ENCODE measurements at regions of chr15 and their contacts with region 1.

Region 1: DNA sequence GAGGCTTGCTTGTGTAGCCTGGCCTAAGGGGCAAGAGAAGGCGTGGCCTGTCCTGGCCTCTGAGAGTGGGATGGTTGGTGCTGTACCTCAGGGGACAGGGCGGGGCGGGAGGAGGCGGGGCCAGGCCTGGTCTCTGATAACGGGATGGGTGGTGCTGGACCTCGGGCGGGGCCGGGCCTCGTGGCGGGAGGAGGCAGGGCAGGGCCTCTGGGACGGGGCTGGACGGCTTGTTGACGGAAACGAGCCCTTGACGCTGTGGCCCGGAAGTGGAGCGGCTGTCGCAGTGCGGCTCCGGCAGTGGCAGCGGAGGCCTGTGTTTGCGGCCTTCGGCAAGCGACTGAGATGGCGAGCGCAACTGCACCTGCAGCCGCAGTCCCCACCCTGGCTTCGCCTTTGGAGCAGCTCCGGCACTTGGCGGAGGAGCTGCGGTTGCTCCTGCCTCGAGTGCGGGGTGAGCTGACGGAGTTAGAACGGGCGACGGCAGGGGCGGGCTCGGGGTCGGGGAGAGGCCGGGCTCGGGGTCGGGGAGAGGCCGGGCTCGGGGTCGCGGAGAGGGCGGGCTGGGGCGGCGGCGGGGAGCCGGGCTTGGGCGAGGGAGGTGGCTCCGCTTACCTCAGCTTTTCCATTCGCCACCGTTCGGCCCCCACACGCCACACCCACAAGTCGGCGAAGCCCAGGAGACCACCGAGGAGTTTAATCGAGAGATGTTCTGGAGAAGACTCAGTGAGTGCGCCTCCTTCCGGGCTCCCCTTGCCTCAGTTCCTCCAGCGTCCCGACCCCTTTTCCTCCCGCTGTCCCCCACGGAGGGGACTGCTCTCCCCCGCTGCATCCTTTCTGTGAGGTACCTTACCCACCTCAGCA is at the start of gene CCNDBP1:
- DNase-seq: peak; percentile 69 to 90 (median 79)
- ATAC-seq: peak; percentile 91
- H3K4me3 ChIP-seq: peak within 1 kb of the TSS; percentile 91
- H3K4me3 Mint-ChIP-seq: peak within 1 kb of the TSS; percentile 90 to 98 (median 96)
- H3K27ac ChIP-seq: peak within 1 kb of the TSS; percentile 95
- H3K27ac Mint-ChIP-seq: peak within 1 kb of the TSS; percentile 95 to 99 (median 98)
- H3K4me1 ChIP-seq: peaks cover 16 to 22% of the 10 kb centered on the region in 2 donors
- H3K4me1 Mint-ChIP-seq: peaks cover 19 to 54% (median 35%) of the 10 kb centered on the region in 7 donors
- H3K27me3 ChIP-seq: no peaks in the 10 kb centered on the region
- H3K27me3 Mint-ChIP-seq: no peaks in the 10 kb centered on the region
- total RNA-seq, gene CCNDBP1: 72.3 to 110 (median 100) TPM

Region 2: GRCh38 chr15:41972253-41973242 is 1212.8 kb before region 1 on chr15 and contains the start of gene EHD4:
- CTCF ChIA-PET with region 1: no interaction called
- POLR2A ChIA-PET with region 1: no interaction called
- intact Hi-C with region 1: loop called in 1 of 2 experiments (anchors 5 kb)
- DNase-seq: peak; percentile 85 to 96 (median 94)
- ATAC-seq: peak; percentile 91
- H3K4me3 ChIP-seq: peak within 1 kb of the TSS; percentile 87
- H3K4me3 Mint-ChIP-seq: peak within 1 kb of the TSS; percentile 85 to 97 (median 94)
- H3K27ac ChIP-seq: peak within 1 kb of the TSS; percentile 83
- H3K27ac Mint-ChIP-seq: peak within 1 kb of the TSS; percentile 90 to 97 (median 95)
- H3K4me1 ChIP-seq: peaks cover 19 to 23% of the 10 kb centered on the region in 2 donors
- H3K4me1 Mint-ChIP-seq: peaks cover 31 to 55% (median 45%) of the 10 kb centered on the region in 7 donors
- H3K27me3 ChIP-seq: no peaks in the 10 kb centered on the region
- H3K27me3 Mint-ChIP-seq: peaks cover 0 to 17% (median 7%) of the 10 kb centered on the region in 5 donors
- total RNA-seq, gene EHD4: 10.4 to 48.3 (median 23.7) TPM

Region 3: DNA sequence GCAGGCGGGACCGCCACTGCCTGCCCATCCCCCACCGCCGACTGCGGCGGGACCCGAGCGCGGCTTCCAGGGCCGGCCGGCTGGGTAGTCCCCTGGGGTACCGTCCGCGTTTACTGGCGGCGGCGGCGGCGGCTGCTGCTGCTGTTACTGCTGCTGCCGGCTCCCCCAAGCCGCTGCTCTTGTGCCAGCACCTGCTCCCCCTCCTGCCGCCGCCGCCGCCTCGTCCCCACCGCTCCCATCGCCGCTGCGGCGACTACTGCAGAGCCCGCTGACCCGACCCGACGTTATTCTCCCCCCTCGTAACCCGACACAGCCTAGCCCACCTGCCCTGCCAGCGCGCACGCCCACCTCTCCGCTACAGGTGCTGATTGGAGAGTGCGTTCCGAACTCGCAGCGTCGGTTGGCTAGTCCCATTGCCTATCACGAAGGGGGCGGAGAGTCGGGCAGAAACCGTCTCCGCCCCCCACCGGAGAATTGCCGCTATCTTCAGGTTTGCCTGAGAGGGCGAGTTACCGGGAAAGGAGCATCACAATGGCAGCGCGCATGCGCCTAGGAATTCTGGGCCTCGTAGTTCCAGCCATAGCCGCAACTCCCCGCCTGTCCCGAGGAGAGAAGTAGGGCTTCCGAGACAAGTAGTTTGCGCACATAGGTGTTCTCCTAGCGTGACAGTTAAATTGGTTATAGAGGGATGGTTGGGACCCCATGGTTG is 264.7 kb before region 1 on chr15 and contains the start of gene TTBK2:
- CTCF ChIA-PET with region 1: no interaction called
- POLR2A ChIA-PET with region 1: no interaction called
- intact Hi-C with region 1: loop called (anchors 2 kb)
- DNase-seq: peak; percentile 93 to 98 (median 97)
- ATAC-seq: peak; percentile 98
- H3K4me3 ChIP-seq: peak within 1 kb of the TSS; percentile 89
- H3K4me3 Mint-ChIP-seq: peak within 1 kb of the TSS; percentile 93 to 100 (median 97)
- H3K27ac ChIP-seq: peak within 1 kb of the TSS; percentile 71
- H3K27ac Mint-ChIP-seq: peak within 1 kb of the TSS; percentile 88 to 97 (median 95)
- H3K4me1 ChIP-seq: peaks cover 4 to 5% of the 10 kb centered on the region in 2 donors
- H3K4me1 Mint-ChIP-seq: peaks cover 14 to 40% (median 29%) of the 10 kb centered on the region in 7 donors
- H3K27me3 ChIP-seq: no peaks in the 10 kb centered on the region
- H3K27me3 Mint-ChIP-seq: peaks cover 0 to 3% (median 0%) of the 10 kb centered on the region in 5 donors
- total RNA-seq, gene TTBK2: 15.7 to 30.5 (median 28.8) TPM

Region 4: DNA sequence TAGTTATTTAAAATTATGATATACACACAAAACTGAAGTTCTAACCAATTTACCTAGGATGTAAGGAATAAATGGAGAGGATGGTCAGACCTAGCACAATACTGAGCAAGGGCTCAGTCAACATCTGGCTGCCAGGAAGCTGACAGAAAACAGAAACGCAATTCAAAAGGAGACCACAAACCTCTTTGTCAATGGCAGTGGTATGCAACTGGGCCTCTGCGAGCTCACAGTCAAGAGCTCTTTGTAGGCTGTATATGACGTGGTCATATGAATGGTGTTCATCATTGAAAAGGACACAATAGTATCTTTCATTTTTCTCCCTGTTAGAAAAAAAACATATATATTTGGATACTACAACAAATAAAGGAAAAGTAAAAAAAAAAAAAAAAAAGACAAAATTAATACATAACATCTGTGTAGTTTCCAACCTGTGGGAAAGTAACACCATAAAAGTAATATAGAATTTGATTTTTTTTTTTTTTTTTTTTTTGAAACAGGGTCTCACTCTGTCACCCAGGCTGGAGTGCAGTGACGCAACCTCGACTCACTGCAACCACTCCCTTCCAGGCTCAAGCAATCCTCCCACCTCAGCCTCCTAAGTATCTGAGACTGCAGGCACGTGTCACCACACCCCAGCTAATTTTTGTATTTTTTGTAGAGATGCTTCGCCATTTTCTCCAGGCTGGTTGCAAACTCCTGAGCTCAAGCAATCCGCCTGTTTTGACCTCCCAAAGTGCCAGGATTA is 117.5 kb before region 1 on chr15:
- CTCF ChIA-PET with region 1: no interaction called
- POLR2A ChIA-PET with region 1: no interaction called
- intact Hi-C with region 1: no loop called
- DNase-seq: no peak
- ATAC-seq: no peak
- H3K4me3 ChIP-seq: no peak overlapping the region
- H3K4me3 Mint-ChIP-seq: no peak overlapping the region
- H3K27ac ChIP-seq: no peak overlapping the region
- H3K27ac Mint-ChIP-seq: no peak overlapping the region
- H3K4me1 ChIP-seq: no peaks in the 10 kb centered on the region
- H3K4me1 Mint-ChIP-seq: peaks cover 0 to 8% (median 0%) of the 10 kb centered on the region in 7 donors
- H3K27me3 ChIP-seq: no peaks in the 10 kb centered on the region
- H3K27me3 Mint-ChIP-seq: no peaks in the 10 kb centered on the region

Region 5: DNA sequence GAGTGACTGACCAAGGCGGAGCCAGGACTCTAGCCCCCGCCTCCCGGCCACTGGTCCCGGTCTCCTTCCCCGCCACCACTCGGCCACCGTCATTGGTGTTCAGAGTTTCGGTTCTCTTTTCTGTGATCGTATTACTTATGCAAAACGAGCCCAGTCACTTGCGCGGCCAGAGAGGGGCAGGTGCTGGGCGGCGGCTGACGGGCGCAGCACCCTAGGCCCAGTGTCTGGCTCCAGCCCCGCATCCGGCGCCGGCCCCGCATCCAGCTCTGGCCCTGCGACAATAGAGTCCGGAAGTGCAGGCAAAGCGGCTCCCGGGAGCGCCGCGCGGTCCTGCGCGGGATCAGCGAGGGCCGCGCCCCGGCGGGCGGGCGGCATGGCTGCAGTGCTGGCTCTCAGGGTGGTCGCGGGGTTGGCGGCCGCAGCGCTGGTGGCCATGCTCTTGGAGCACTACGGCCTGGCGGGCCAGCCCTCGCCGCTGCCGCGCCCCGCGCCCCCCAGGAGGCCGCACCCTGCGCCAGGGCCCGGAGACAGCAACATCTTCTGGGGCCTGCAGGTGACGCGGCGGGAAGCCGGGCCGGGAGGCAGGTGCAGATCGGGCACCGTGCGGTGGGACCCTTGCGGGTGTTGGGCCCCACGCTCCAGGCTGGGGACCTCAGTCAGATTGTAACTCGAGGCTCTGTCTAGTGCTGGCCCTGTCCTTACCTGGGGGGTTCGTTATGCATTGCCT is 51.8 kb before region 1 on chr15 and contains the start of gene TMEM62:
- CTCF ChIA-PET with region 1: no interaction called
- POLR2A ChIA-PET with region 1: interaction called, 4 read pairs
- intact Hi-C with region 1: loop called in 1 of 2 experiments (anchors 1 kb)
- DNase-seq: peak; percentile 33 to 67 (median 46)
- ATAC-seq: peak; percentile 88
- H3K4me3 ChIP-seq: peak within 1 kb of the TSS; percentile 65
- H3K4me3 Mint-ChIP-seq: peak within 1 kb of the TSS; percentile 86 to 97 (median 95)
- H3K27ac ChIP-seq: peak within 1 kb of the TSS; percentile 72
- H3K27ac Mint-ChIP-seq: peak within 1 kb of the TSS; percentile 77 to 93 (median 89)
- H3K4me1 ChIP-seq: peaks cover 6 to 11% of the 10 kb centered on the region in 2 donors
- H3K4me1 Mint-ChIP-seq: peaks cover 13 to 29% (median 22%) of the 10 kb centered on the region in 7 donors
- H3K27me3 ChIP-seq: no peaks in the 10 kb centered on the region
- H3K27me3 Mint-ChIP-seq: peaks cover 0 to 15% (median 7%) of the 10 kb centered on the region in 5 donors
- total RNA-seq, gene TMEM62: 12.0 to 21.5 (median 17.7) TPM

Region 6: GRCh38 chr15:43225201-43225949 is 40.0 kb after region 1 on chr15:
- CTCF ChIA-PET with region 1: no interaction called
- POLR2A ChIA-PET with region 1: no interaction called
- intact Hi-C with region 1: loop called in 1 of 2 experiments (anchors 1 kb)
- DNase-seq: peak in 7 of 9 donors; percentile 29 to 69 (median 56)
- ATAC-seq: peak; percentile 85
- H3K4me3 ChIP-seq: no peak overlapping the region
- H3K4me3 Mint-ChIP-seq: peak overlapping the region in 4 of 10 donors; percentile 1 to 62 (median 28)
- H3K27ac ChIP-seq: no peak overlapping the region
- H3K27ac Mint-ChIP-seq: no peak overlapping the region
- H3K4me1 ChIP-seq: no peaks in the 10 kb centered on the region
- H3K4me1 Mint-ChIP-seq: peaks cover 1 to 9% (median 7%) of the 10 kb centered on the region in 7 donors
- H3K27me3 ChIP-seq: no peaks in the 10 kb centered on the region
- H3K27me3 Mint-ChIP-seq: peaks cover 5 to 24% (median 11%) of the 10 kb centered on the region in 5 donors

Region 7: GRCh38 chr15:43510200-43511011 is 325.0 kb after region 1 on chr15:
- CTCF ChIA-PET with region 1: no interaction called
- POLR2A ChIA-PET with region 1: interaction called, 3 read pairs
- intact Hi-C with region 1: loop called in 1 of 2 experiments (anchors 10 kb)
- DNase-seq: peak; percentile 91 to 96 (median 94)
- ATAC-seq: peak; percentile 97
- H3K4me3 ChIP-seq: peak overlapping the region; percentile 88
- H3K4me3 Mint-ChIP-seq: peak overlapping the region; percentile 89 to 100 (median 94)
- H3K27ac ChIP-seq: peak overlapping the region; percentile 76
- H3K27ac Mint-ChIP-seq: peak overlapping the region; percentile 92 to 99 (median 97)
- H3K4me1 ChIP-seq: peaks cover 14 to 17% of the 10 kb centered on the region in 2 donors
- H3K4me1 Mint-ChIP-seq: peaks cover 14 to 51% (median 28%) of the 10 kb centered on the region in 7 donors
- H3K27me3 ChIP-seq: no peaks in the 10 kb centered on the region
- H3K27me3 Mint-ChIP-seq: peaks cover 0 to 2% (median under 1%) of the 10 kb centered on the region in 5 donors

Measured in naive thymus-derived CD4-positive, alpha-beta T cell (primary cell).